Dorsolateral prefrontal cortex (tissue), 120 donors: ENCODE measurements at regions of chr1 and their contacts with region 1.

Region 1: GRCh38 chr1:225777583-225778336 is at the start of gene SRP9:
- DNase-seq: peak; percentile 96 to 99 (median 98)
- H3K4me3 ChIP-seq: peak within 1 kb of the TSS; percentile 36 to 99 (median 86)
- H3K27ac ChIP-seq: peak within 1 kb of the TSS; percentile 41 to 98 (median 93)
- H3K27me3 ChIP-seq: no peaks in the 10 kb centered on the region
- CTCF ChIP-seq: peak; percentile 67 to 96 (median 90)
- total RNA-seq, gene SRP9: 175 to 327 (median 230) TPM

Region 2: DNA sequence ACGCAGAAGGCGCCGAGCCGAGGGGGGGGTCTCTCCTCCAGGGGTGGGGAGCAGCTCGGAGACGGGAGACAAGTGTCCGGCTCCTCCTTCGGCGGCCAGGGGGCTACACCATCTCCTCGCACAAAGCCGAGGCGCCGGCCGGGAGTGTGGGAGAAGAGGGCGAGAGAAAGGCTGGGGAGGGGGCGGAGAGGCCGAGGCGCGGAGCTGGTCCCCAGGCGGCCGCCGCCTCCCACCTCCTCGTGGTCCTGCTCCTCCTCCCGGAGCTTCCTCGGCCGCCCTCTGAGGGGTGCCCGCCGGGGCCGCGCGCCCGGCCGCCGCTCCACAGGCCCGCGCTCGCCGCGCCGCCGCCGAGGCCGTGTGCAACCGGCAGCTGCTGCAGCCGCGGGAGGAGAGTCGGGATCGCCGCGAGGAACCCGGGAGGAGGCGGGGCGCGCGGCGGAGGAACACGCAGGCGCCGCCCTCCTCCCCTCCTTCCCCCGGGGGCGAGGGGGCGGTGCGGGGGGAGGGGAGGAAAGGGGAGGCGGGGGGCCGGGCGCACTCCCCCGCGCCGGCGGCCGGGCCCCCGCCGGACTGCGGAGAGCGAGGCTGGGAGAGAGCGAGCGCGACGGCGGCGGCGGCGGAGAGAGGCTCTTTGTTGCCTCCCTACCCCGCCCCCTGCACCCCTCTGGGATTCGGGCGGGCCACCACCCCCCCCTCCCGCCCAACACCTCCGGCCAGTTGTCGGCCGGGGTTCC is 124.9 kb before region 1 on chr1 and contains the start of gene ENAH:
- intact Hi-C with region 1: loop called (anchors 1 to 2 kb)
- DNase-seq: peak; percentile 51 to 89 (median 76)
- H3K4me3 ChIP-seq: peak within 1 kb of the TSS; percentile 68 to 98 (median 90)
- H3K27ac ChIP-seq: peak within 1 kb of the TSS; percentile 84 to 100 (median 98)
- H3K27me3 ChIP-seq: no peaks in the 10 kb centered on the region
- CTCF ChIP-seq: peak in 9 of 56 donors; percentile 4 to 31 (median 11)
- total RNA-seq, gene ENAH: 57.3 to 134 (median 81.4) TPM

Region 3: DNA sequence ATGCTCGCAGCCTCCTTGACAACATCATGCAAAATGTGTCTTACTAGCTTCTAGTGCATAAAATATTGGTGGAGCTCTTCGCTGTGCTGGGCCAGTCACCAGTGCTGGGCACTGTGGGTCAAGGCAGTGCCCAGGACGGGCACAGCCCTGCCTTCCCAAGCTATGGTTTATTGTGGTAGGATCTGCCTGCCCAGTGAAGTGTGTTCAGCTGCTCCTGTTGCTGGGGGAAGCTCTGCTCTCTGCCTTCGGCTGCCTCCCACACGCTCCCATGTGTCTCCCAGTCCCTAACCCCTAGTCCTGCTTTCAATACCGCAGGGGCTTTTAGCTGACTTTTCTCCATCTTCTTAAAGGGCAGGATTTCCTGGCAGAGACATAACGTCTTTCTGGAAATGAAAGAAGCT is 47.8 kb after region 1 on chr1:
- intact Hi-C with region 1: no loop called
- DNase-seq: peak in 1 of 10 donors; percentile 12
- H3K4me3 ChIP-seq: no peak overlapping the region
- H3K27ac ChIP-seq: peak overlapping the region in 18 of 59 donors; percentile 3 to 57 (median 27)
- H3K27me3 ChIP-seq: no peaks in the 10 kb centered on the region
- CTCF ChIP-seq: no peak

Region 4: DNA sequence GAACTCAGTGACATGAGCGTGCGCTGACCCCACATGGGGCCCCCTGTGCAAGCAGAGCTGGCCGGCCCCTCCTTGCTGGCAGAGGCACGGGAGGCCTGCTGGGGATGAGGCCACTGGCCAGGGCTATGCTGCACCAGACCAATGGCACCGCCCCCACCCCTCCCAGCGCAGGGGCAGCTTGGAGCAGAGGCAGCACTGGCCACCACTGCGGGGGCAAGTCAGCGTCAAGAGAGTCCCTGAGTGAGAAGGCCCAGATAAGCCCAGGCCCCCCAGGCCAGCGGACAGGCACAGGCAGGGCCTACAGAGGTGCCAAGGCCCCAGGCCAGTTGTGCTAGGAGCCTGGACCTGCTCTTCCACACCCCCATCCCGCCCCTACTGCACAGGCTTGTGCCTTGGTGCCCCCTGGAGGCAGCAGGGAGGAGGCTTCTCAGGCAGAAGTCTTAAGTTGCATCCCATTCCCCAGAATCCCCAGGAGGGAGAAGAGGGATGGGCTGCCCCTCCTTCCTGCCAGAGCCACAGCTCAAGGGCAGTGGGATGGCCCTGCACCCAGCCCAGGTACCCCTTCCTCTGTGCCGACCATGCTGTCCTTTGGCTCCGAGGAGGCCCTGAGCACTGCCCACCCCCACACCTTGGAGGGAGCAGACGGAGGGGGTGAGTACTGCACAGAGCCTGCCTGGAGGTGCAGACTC is 68.0 kb after region 1 on chr1:
- intact Hi-C with region 1: loop called in 1 of 2 experiments (anchors 5 kb)
- DNase-seq: peak in 8 of 10 donors; percentile 21 to 71 (median 48)
- H3K4me3 ChIP-seq: no peak overlapping the region
- H3K27ac ChIP-seq: peak overlapping the region in 58 of 59 donors; percentile 22 to 99 (median 93)
- H3K27me3 ChIP-seq: no peaks in the 10 kb centered on the region
- CTCF ChIP-seq: peak; percentile 24 to 78 (median 58)

Region 5: DNA sequence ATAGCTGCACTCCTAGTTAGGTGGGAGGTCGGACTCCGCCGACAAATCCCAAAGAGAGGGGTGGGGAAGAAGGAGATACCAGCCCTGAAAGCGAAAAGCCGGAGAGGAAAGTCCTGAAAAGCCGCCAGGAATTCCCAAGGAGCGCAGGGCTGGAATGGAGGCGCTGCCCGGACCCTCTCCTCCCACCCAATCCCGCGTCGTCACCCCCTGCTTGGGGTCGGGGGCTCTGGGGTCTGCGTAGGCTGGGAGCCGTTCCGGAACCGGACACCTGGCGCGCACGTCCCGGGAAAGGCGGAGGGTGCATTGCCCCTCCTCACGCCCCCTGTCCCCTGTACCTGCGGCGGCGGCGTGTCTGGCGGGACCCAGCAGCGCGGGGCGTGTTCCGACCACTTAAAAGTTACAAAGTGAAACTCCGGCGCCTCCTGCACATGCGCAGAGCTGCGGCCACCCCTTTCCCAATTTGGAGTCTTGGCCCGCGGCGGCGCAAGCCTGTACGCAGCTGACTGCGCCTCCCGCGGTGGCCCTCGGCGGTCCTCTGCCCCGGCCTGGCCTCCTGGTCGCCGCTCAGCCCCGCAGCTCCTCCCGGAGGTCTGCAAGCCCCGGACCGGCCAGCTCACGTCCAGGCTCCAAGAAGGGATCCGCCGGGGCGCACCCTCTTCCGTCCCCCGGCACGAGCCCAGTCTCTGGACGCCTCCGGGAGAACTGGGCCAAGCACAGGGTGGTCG is 104.4 kb after region 1 on chr1 and contains the start of gene TMEM63A:
- intact Hi-C with region 1: loop called in 1 of 2 experiments (anchors 2 kb)
- DNase-seq: peak; percentile 47 to 91 (median 86)
- H3K4me3 ChIP-seq: peak within 1 kb of the TSS; percentile 62 to 98 (median 87)
- H3K27ac ChIP-seq: peak within 1 kb of the TSS; percentile 58 to 100 (median 97)
- H3K27me3 ChIP-seq: no peaks in the 10 kb centered on the region
- CTCF ChIP-seq: peak; percentile 3 to 72 (median 50)
- total RNA-seq, gene TMEM63A: 47.1 to 833 (median 180) TPM

Region 6: GRCh38 chr1:225923692-225924555 is 146.2 kb after region 1 on chr1 and contains the start of gene PYCR2:
- intact Hi-C with region 1: loop called (anchors 2 to 10 kb)
- DNase-seq: peak; percentile 89 to 98 (median 94)
- H3K4me3 ChIP-seq: peak within 1 kb of the TSS; percentile 66 to 100 (median 94)
- H3K27ac ChIP-seq: peak within 1 kb of the TSS; percentile 35 to 98 (median 91)
- H3K27me3 ChIP-seq: no peaks in the 10 kb centered on the region
- CTCF ChIP-seq: peak in 32 of 56 donors; percentile 4 to 61 (median 30)
- total RNA-seq, gene PYCR2: 44.8 to 116 (median 65.6) TPM